Natural killer cell (primary cell): ENCODE measurements at regions of chr18 and their contacts with region 1.

Region 1: GRCh38 chr18:31942999-31943865 is at the start of gene TRAPPC8:
- DNase-seq: peak; percentile 85 to 96
- ATAC-seq: peak; percentile 82 to 93 (median 83)
- H3K4me3 ChIP-seq: peak within 1 kb of the TSS; percentile 96
- H3K4me3 Mint-ChIP-seq: peak within 1 kb of the TSS; percentile 99
- H3K27ac ChIP-seq: peak within 1 kb of the TSS; percentile 98
- H3K27ac Mint-ChIP-seq: peak within 1 kb of the TSS; percentile 95 to 99
- H3K4me1 ChIP-seq: peaks cover 13% of the 10 kb centered on the region
- H3K4me1 Mint-ChIP-seq: peaks cover 45 to 48% of the 10 kb centered on the region in 2 donors
- H3K27me3 ChIP-seq: no peaks in the 10 kb centered on the region
- H3K27me3 Mint-ChIP-seq: peaks cover 0 to 2% of the 10 kb centered on the region in 2 donors
- CTCF ChIP-seq: no peak
- total RNA-seq, gene TRAPPC8: 38.5 to 51.2 (median 41.4) TPM

Region 2: GRCh38 chr18:31685097-31686082 is 257.8 kb before region 1 on chr18:
- intact Hi-C with region 1: loop called (anchors 5 kb)
- DNase-seq: peak; percentile 71 to 77
- ATAC-seq: peak; percentile 73 to 83 (median 79)
- H3K4me3 ChIP-seq: peak overlapping the region; percentile 70
- H3K4me3 Mint-ChIP-seq: peak overlapping the region; percentile 85
- H3K27ac ChIP-seq: peak overlapping the region; percentile 96
- H3K27ac Mint-ChIP-seq: peak overlapping the region; percentile 86 to 90
- H3K4me1 ChIP-seq: peaks cover 15% of the 10 kb centered on the region
- H3K4me1 Mint-ChIP-seq: peaks cover 38 to 45% of the 10 kb centered on the region in 2 donors
- H3K27me3 ChIP-seq: no peaks in the 10 kb centered on the region
- H3K27me3 Mint-ChIP-seq: peaks cover 0 to 2% of the 10 kb centered on the region in 2 donors
- CTCF ChIP-seq: peak; percentile 37

Region 3: GRCh38 chr18:31931163-31931885 is 11.9 kb before region 1 on chr18:
- intact Hi-C with region 1: no loop called
- DNase-seq: no peak
- ATAC-seq: no peak
- H3K4me3 ChIP-seq: no peak overlapping the region
- H3K4me3 Mint-ChIP-seq: no peak overlapping the region
- H3K27ac ChIP-seq: no peak overlapping the region
- H3K27ac Mint-ChIP-seq: peak overlapping the region in 1 of 2 donors; percentile 54
- H3K4me1 ChIP-seq: no peaks in the 10 kb centered on the region
- H3K4me1 Mint-ChIP-seq: peaks cover 12 to 13% of the 10 kb centered on the region in 2 donors
- H3K27me3 ChIP-seq: no peaks in the 10 kb centered on the region
- H3K27me3 Mint-ChIP-seq: no peaks in the 10 kb centered on the region
- CTCF ChIP-seq: no peak

Region 4: DNA sequence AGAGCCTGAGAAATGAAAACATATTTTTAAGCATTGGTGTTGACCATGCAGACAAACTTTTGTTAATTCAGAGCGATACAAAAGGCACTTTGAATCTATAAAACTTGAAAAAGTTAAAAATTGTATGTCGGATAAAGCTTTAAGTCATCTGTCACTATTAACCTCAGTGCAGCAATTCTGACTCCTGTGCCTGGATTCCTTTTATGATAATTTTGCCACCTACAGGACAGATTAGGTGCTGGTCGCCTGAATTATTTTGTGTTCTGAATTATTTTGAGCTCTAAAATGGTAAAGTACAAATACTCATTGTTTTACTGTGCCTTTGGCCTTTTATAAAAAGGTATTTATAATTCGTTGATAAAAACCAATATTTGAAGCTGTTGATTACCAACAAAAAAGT is 129.1 kb after region 1 on chr18:
- intact Hi-C with region 1: loop called (anchors 5 kb)
- DNase-seq: peak in 1 of 2 donors; percentile 64
- ATAC-seq: peak; percentile 72 to 89 (median 81)
- H3K4me3 ChIP-seq: no peak overlapping the region
- H3K4me3 Mint-ChIP-seq: no peak overlapping the region
- H3K27ac ChIP-seq: no peak overlapping the region
- H3K27ac Mint-ChIP-seq: peak overlapping the region in 1 of 2 donors; percentile 73
- H3K4me1 ChIP-seq: peaks cover 2% of the 10 kb centered on the region
- H3K4me1 Mint-ChIP-seq: peaks cover 24 to 27% of the 10 kb centered on the region in 2 donors
- H3K27me3 ChIP-seq: no peaks in the 10 kb centered on the region
- H3K27me3 Mint-ChIP-seq: no peaks in the 10 kb centered on the region
- CTCF ChIP-seq: peak; percentile 66

Region 5: DNA sequence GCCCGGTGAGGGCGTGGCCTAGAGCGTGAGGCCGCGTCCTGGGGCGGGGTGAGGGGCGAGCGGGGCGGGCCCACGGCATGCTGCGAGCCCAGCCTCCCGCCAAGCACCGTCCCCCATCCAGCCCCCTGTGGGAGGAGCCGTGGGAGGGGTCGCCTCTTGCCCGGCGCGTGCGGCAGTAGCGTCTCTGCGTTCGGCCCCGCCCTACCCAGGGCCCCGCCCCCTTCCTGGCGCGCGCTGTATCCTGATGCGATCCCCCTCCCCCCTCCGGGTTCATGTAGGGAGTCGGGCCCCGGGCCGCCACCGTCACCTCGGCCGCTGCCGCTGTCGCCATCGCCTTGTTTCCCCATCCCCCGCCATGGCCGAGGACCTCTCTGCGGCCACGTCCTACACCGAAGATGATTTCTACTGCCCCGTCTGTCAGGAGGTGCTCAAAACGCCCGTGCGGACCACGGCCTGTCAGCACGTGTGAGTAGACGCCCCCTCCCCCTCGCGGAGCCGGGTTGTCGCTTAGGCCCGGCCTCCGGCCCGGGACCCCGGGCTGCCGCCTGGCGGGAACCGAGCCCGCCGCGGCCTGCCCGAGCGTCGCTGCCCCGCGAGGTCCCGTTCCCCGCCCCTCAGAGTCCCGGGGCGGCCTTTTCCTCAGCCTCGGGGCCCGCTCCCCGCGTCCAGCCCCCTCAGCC is 149.3 kb after region 1 on chr18:
- intact Hi-C with region 1: loop called (anchors 1 kb)
- DNase-seq: peak; percentile 98 to 99
- ATAC-seq: peak; percentile 87 to 97 (median 88)
- H3K4me3 ChIP-seq: peak overlapping the region; percentile 97
- H3K4me3 Mint-ChIP-seq: peak overlapping the region; percentile 100
- H3K27ac ChIP-seq: peak overlapping the region; percentile 99
- H3K27ac Mint-ChIP-seq: peak overlapping the region; percentile 95 to 96
- H3K4me1 ChIP-seq: peaks cover 13% of the 10 kb centered on the region
- H3K4me1 Mint-ChIP-seq: peaks cover 42 to 43% of the 10 kb centered on the region in 2 donors
- H3K27me3 ChIP-seq: no peaks in the 10 kb centered on the region
- H3K27me3 Mint-ChIP-seq: no peaks in the 10 kb centered on the region
- CTCF ChIP-seq: no peak

Region 6: DNA sequence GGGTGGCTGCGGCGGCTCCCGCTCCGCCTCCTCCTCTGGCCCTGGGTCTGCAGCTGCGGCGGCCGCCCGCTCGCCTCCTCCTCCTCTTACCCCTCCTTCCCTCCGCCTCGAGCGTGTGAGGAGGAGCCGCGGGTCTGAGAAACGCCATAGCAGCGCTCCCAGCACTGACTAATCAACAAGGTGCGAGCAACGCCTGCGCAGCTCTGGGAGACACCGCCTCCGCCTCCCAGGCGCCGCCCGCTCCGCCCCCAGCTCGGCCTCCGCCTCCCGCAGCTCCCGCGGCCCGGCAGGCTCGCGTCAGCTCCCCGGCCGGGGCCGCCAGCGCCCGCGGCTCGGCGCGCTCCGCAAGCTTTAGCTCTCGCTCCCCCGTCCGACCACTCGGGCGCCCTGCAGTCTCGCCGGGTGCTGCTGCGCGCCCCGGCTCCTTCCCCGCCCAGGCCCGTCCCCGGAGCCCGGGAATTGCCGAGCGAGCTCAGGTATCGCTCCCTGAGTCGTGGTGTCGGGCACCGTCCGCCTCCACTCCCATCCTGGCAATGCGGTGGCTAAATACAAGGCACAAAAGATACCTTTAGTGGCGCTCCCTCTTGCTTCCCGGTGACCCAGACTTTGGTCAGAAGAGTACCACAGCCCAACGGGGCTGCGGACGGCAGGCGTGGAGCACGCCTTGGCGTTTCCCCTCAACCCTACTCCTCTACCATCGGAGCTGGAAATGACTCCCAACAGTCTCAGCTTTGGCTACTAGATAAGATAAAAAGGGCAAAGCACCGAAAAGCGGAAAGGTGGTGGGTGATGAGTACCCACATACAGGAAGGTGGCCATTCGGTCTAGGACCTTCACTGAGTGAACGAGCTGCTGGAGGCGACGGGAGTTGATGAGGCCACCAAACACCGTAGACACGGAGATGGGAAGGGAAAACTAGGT is 527.7 kb after region 1 on chr18 and contains the start of gene GAREM1:
- intact Hi-C with region 1: loop called (anchors 5 kb)
- DNase-seq: peak; percentile 67 to 88
- ATAC-seq: peak; percentile 87 to 92 (median 92)
- H3K4me3 ChIP-seq: peak within 1 kb of the TSS; percentile 14
- H3K4me3 Mint-ChIP-seq: peak within 1 kb of the TSS; percentile 88
- H3K27ac ChIP-seq: no peak within 1 kb of the TSS
- H3K27ac Mint-ChIP-seq: peak within 1 kb of the TSS; percentile 41 to 72
- H3K4me1 ChIP-seq: peaks cover 16% of the 10 kb centered on the region
- H3K4me1 Mint-ChIP-seq: peaks cover 33 to 49% of the 10 kb centered on the region in 2 donors
- H3K27me3 ChIP-seq: peaks cover 15% of the 10 kb centered on the region
- H3K27me3 Mint-ChIP-seq: peaks cover 8 to 20% of the 10 kb centered on the region in 2 donors
- CTCF ChIP-seq: no peak
- total RNA-seq, gene GAREM1: 0.09 TPM in 1 of 3 donors, not detected in the others